A549 (cell line): ENCODE measurements at regions of chr4 and their contacts with region 1.

Region 1: DNA sequence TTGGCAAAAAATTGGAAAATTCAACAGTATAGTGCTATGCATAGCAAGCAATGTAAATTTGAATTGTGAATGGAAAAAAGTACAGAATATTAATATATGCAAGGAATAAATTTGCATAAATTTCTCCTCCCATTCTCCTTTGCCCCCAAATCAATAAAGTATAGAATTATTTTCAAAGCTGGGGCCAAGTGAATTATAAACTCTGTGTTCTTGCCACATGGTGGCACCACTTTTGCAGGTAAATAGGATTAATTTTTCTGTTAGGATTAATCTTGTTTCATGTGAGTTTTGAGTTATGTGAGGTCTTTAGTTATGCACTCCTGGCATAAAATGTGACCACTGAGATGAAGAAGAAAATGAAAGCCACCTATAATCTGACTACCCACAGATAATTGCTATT is 19.9 kb downstream of the COPS4 start:
- DNase-seq: peak in 1 of 2 experiments; percentile 27
- ATAC-seq: no peak
- H3K4me3 ChIP-seq: no peak overlapping the region
- H3K27ac ChIP-seq: no peak overlapping the region
- H3K4me1 ChIP-seq: no peaks in the 10 kb centered on the region
- CTCF ChIP-seq: peak; percentile 55
- EP300 ChIP-seq: no peak
- POLR2A ChIP-seq: no peak
- RAD21 ChIP-seq: peak; percentile 61 to 69

Region 2: GRCh38 chr4:83022724-83023450 is 32.0 kb before region 1 on chr4:
- CTCF ChIA-PET with region 1: no interaction called
- POLR2A ChIA-PET with region 1: no interaction called
- DNase-seq: no peak
- ATAC-seq: no peak
- H3K4me3 ChIP-seq: no peak overlapping the region
- H3K27ac ChIP-seq: no peak overlapping the region
- H3K4me1 ChIP-seq: no peaks in the 10 kb centered on the region
- CTCF ChIP-seq: no peak
- EP300 ChIP-seq: no peak
- POLR2A ChIP-seq: no peak
- RAD21 ChIP-seq: no peak

Region 3: GRCh38 chr4:83255584-83255983 is 200.7 kb after region 1 on chr4:
- CTCF ChIA-PET with region 1: interaction called, 15 read pairs
- POLR2A ChIA-PET with region 1: no interaction called
- DNase-seq: peak; percentile 32 to 81
- ATAC-seq: no peak
- H3K4me3 ChIP-seq: no peak overlapping the region; the same call in 2 of the 3 replicates
- H3K27ac ChIP-seq: peak overlapping the region; percentile 85 to 91
- H3K4me1 ChIP-seq: peaks cover 53% of the 10 kb centered on the region
- CTCF ChIP-seq: no peak
- EP300 ChIP-seq: peak; percentile 38 to 56; a peak in 3 of 5 replicates
- POLR2A ChIP-seq: no peak
- RAD21 ChIP-seq: no peak